Left cardiac atrium (tissue), 4 donors: ENCODE measurements at regions of chr2 and their contacts with region 1.

Region 1: GRCh38 chr2:17827306-17827705 is 11.0 kb downstream of the MSGN1 start:
- DNase-seq: no peak
- ATAC-seq: no peak

Region 2: GRCh38 chr2:17753803-17754663 is 73.3 kb before region 1 on chr2 and contains the starts of genes GEN1 and SMC6:
- intact Hi-C with region 1: loop called in 1 of 2 experiments (anchors 5 kb)
- DNase-seq: peak; percentile 90
- ATAC-seq: peak; percentile 97 to 98
- total RNA-seq, gene GEN1: 3.0 TPM
- total RNA-seq, gene SMC6: 12.4 to 12.8 TPM